ENCODE measurements at regions of chr15 and their contacts with region 1.

Region 1: GRCh38 chr15:70097337-70098169 is at the start of gene TLE3:
- DNase-seq: peak; percentile 98 to 99
- ATAC-seq: peak; percentile 57 to 80 (median 70)
- H3K4me3 ChIP-seq: peak within 1 kb of the TSS; percentile 74
- H3K4me3 Mint-ChIP-seq: peak within 1 kb of the TSS; percentile 91
- H3K27ac ChIP-seq: peak within 1 kb of the TSS; percentile 94
- H3K27ac Mint-ChIP-seq: peak within 1 kb of the TSS; percentile 91 to 100
- H3K4me1 ChIP-seq: peaks cover 70% of the 10 kb centered on the region
- H3K4me1 Mint-ChIP-seq: peaks cover 49 to 66% of the 10 kb centered on the region in 2 donors
- H3K27me3 ChIP-seq: peaks cover 26% of the 10 kb centered on the region
- H3K27me3 Mint-ChIP-seq: peaks cover 23 to 38% of the 10 kb centered on the region in 2 donors
- CTCF ChIP-seq: peak; percentile 32
- total RNA-seq, gene TLE3: 32.1 to 94.9 (median 36.7) TPM

Region 2: GRCh38 chr15:69452692-69453521 is 644.6 kb before region 1 on chr15 and contains the start of gene RPLP1:
- intact Hi-C with region 1: loop called (anchors 1 kb)
- DNase-seq: peak; percentile 96 to 99
- ATAC-seq: peak; percentile 84 to 94 (median 90)
- H3K4me3 ChIP-seq: peak within 1 kb of the TSS; percentile 83
- H3K4me3 Mint-ChIP-seq: peak within 1 kb of the TSS; percentile 98
- H3K27ac ChIP-seq: peak within 1 kb of the TSS; percentile 83
- H3K27ac Mint-ChIP-seq: peak within 1 kb of the TSS; percentile 98 to 100
- H3K4me1 ChIP-seq: peaks cover 23% of the 10 kb centered on the region
- H3K4me1 Mint-ChIP-seq: peaks cover 41 to 45% of the 10 kb centered on the region in 2 donors
- H3K27me3 ChIP-seq: no peaks in the 10 kb centered on the region
- H3K27me3 Mint-ChIP-seq: no peaks in the 10 kb centered on the region
- CTCF ChIP-seq: no peak
- total RNA-seq, gene RPLP1: 895 to 1,167 (median 974) TPM

Region 3: DNA sequence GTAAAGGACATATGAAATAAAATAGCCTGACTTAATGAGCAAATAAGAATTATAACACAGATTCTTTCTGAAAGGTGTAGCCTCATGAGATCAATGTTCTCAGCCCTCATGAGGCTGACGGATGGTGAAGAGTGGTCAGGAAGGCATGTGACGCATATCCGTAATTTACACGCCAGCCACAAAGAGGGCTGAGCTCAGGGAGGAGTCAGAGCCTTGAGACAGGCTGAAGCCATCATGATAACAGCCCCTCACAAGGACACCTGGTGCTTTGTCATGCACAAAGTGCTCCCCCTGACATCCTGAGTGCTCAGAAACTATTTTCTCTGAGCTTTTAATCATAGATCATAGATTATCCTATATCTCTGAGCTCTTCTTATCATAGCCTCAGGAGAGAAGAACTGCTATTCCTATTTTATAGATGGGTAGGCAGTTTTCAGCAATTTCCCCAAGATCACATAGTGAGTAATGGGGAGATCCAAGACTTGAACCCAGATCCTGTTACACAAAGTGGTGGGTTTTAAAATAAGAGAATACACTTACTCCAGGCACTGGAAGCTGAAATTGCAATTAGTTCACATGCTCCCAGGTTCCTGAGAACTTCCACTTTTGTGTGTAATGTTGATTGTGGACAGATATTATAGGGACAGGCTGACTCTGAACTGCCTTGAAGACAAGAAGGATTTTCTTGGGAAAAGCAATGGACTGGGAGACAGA is 377.9 kb before region 1 on chr15:
- intact Hi-C with region 1: loop called (anchors 1 kb)
- DNase-seq: peak; percentile 69 to 89
- ATAC-seq: peak; percentile 79 to 94 (median 92)
- H3K4me3 ChIP-seq: no peak overlapping the region
- H3K4me3 Mint-ChIP-seq: peak overlapping the region; percentile 59
- H3K27ac ChIP-seq: peak overlapping the region; percentile 90
- H3K27ac Mint-ChIP-seq: peak overlapping the region; percentile 74 to 85
- H3K4me1 ChIP-seq: peaks cover 82% of the 10 kb centered on the region
- H3K4me1 Mint-ChIP-seq: peaks cover 85 to 93% of the 10 kb centered on the region in 2 donors
- H3K27me3 ChIP-seq: no peaks in the 10 kb centered on the region
- H3K27me3 Mint-ChIP-seq: peaks cover 6% of the 10 kb centered on the region in 2 donors
- CTCF ChIP-seq: no peak

Region 4: DNA sequence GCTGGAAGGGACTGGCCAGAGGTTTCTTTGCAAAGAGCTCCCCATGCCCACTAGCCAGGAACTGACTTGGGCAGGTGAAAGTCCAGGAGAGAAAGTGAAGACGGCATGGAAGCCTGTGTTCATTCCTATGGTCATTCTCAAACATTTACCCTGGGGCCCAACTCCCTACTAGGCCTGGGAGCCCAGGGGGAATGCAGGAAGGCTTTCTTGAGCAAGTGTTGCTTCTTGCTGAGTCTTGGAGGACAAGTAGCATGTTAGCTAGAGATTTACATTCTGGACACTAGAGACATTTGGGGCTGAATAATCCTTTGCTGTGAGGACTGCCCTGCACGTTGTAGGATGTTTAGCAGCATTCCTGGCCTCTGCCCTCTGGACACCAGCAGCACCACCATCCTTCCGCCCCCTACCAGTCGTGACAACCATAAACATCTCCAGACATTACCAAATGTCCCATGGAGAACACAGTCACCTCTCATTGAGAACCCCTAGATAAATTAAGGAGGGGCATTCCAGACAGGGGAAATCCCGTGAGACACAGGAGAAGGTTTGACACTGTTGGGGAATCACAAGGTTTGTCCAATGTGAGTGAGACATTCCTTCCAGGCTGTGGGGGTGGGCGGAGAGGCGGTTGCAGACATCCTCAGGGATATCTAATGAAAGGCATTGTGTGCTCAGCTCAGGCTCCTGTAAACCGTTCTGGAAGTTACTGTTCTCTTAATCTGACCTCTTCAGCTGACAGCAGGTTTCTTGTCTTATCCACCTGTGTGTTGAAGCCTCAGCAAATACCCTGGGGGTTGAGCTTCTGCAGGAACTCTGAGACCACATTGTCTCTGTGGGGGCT is 236.0 kb before region 1 on chr15:
- intact Hi-C with region 1: no loop called
- DNase-seq: no peak
- ATAC-seq: no peak
- H3K4me3 ChIP-seq: no peak overlapping the region
- H3K4me3 Mint-ChIP-seq: no peak overlapping the region
- H3K27ac ChIP-seq: no peak overlapping the region
- H3K27ac Mint-ChIP-seq: no peak overlapping the region
- H3K4me1 ChIP-seq: peaks cover 13% of the 10 kb centered on the region
- H3K4me1 Mint-ChIP-seq: peaks cover 6 to 11% of the 10 kb centered on the region in 2 donors
- H3K27me3 ChIP-seq: no peaks in the 10 kb centered on the region
- H3K27me3 Mint-ChIP-seq: peaks cover 12 to 15% of the 10 kb centered on the region in 2 donors
- CTCF ChIP-seq: no peak

Region 5: DNA sequence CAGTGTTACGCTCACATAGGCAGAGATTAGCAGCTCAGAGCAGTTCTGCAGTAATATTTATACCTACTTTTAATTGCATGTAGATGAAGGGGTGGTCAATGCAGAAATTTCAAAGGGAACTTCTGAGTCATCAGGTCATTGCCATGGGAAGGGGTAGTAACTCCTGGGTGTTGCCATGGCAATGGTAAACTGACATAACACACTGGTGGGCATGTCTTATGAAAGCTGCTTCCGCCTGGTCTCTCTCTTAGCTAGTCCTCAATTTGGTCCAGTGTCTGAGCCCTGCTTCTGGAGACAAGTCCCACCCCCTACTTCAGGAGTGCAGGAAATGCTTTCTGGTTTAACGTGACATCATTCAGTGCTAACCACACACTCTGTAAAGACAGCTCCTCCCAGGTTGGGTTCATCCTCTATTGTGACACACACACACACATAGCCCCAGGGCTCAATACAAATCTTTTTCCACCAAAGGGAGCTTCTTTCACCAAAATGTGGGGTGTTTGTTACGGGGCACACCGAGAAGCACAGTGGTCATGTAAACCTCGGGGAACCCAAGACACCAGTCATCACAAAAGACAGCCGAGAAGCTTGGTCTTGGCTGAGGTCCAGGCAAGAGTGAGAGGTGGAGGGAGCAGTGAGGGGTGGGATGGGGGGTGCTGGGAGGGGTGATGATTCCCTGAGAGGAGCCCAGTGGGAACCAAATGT is 74.3 kb before region 1 on chr15:
- intact Hi-C with region 1: loop called (anchors 5 kb)
- DNase-seq: peak; percentile 47 to 89
- ATAC-seq: peak; percentile 95 to 99 (median 95)
- H3K4me3 ChIP-seq: no peak overlapping the region
- H3K4me3 Mint-ChIP-seq: peak overlapping the region; percentile 42
- H3K27ac ChIP-seq: peak overlapping the region; percentile 32
- H3K27ac Mint-ChIP-seq: peak overlapping the region; percentile 37 to 86
- H3K4me1 ChIP-seq: peaks cover 20% of the 10 kb centered on the region
- H3K4me1 Mint-ChIP-seq: peaks cover 22 to 30% of the 10 kb centered on the region in 2 donors
- H3K27me3 ChIP-seq: no peaks in the 10 kb centered on the region
- H3K27me3 Mint-ChIP-seq: peaks cover 21 to 50% of the 10 kb centered on the region in 2 donors
- CTCF ChIP-seq: no peak

Region 6: GRCh38 chr15:70299931-70300869 is 202.6 kb after region 1 on chr15:
- intact Hi-C with region 1: loop called (anchors 2 kb)
- DNase-seq: peak; percentile 80 to 87
- ATAC-seq: peak; percentile 91 to 96 (median 94)
- H3K4me3 ChIP-seq: no peak overlapping the region
- H3K4me3 Mint-ChIP-seq: peak overlapping the region; percentile 55
- H3K27ac ChIP-seq: no peak overlapping the region
- H3K27ac Mint-ChIP-seq: peak overlapping the region; percentile 60 to 67
- H3K4me1 ChIP-seq: peaks cover 24% of the 10 kb centered on the region
- H3K4me1 Mint-ChIP-seq: peaks cover 9 to 11% of the 10 kb centered on the region in 2 donors
- H3K27me3 ChIP-seq: peaks cover 66% of the 10 kb centered on the region
- H3K27me3 Mint-ChIP-seq: peaks cover 32% of the 10 kb centered on the region in 2 donors
- CTCF ChIP-seq: no peak

Measured in natural killer cell (primary cell).